HCT116 (cell line): ENCODE measurements at regions of chr10 and their contacts with region 1.

Region 1: DNA sequence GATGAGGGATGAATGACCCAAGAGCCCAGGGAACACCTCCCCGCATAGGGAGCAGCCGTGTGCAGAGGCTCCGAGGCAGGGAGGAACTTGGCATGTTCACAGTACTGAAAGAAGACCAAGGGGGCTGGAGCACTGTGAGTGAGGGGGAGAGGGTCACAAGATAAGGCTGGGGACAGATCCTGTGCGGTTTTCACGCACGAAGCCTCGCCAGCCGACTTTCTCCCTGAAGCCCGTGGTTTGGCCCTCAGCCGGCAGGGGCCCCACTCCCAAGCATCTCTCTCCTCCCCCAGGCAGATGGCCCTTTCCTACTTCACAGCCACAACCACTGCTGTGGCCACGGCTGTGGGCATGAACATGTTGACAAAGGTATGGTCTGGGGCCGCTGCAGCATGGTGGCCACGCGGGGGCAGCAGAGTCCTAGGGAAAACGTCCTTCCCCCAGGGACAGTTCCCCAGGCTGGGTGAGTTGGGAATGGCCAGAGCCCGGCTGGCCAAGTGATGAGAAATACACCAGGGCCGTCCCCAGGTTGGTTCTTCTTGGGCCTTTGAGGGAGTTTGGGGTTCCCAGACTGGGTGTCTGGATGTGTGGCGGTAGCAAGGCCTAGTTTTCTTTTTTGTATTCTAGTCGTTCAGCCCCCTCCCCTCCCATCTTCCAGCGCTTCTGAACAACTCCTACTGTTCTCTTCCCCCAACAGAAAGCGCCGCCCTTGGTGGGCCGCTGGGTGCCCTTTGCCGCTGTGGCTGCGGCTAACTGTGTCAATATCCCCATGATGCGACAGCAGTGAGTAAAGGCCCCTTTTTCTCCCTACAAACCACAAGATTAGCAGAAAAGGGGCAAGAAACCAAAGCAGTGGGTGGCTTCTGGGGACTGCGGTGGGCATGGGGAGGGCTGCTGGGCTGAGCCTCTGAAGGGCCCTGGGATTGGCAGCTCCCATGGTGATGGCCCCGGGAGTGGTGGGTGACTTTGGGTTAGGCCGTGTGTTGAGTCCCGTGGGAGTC is 14.4 kb upstream of the WBP1L start:
- DNase-seq: peak; percentile 49
- ATAC-seq: peak; percentile 99
- H3K4me3 ChIP-seq: no peak overlapping the region
- H3K27ac ChIP-seq: no peak overlapping the region
- H3K4me1 ChIP-seq: no peaks in the 10 kb centered on the region
- H3K27me3 ChIP-seq: no peaks in the 10 kb centered on the region
- CTCF ChIP-seq: peak; percentile 83 to 99 (median 99)
- POLR2A ChIP-seq: no peak
- RAD21 ChIP-seq: peak; percentile 95

Region 2: DNA sequence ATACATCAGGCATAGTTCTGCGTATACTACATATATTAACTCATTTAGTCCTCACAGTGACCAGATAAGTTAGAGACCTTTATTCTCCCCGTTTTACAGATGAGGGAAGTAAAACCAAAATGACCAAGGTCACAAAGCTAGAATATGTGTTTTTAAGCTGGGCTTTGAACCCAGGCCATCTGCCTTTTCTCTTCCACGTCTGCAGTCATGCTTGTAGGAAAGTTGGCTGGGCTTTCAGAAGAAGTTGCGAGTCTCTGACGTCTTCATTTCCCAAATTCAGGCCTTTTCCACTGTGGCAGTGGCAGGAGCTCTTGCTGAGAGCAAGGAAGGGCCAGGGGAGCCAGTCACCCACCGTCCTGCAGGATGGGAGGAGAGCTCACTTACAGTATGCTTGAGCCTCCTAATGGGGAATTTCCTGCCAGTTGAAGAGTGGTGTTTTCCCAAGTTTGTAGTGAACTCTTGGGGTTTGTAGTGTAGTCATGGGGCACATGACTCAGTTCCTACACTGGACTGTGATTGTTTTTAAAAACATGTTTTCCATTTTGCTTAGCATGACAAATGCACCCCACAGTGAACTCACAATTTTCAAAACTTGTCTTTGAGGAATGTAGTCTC is 73.7 kb after region 1 on chr10:
- CTCF ChIA-PET with region 1: no interaction called
- POLR2A ChIA-PET with region 1: no interaction called
- RAD21 ChIA-PET with region 1: no interaction called
- intact Hi-C with region 1: no loop called
- DNase-seq: no peak
- ATAC-seq: 0 out of 2 replicates have a peak, but pooled peaks have one; percentile 20
- H3K4me3 ChIP-seq: no peak overlapping the region
- H3K27ac ChIP-seq: no peak overlapping the region
- H3K4me1 ChIP-seq: no peaks in the 10 kb centered on the region
- H3K27me3 ChIP-seq: no peaks in the 10 kb centered on the region
- CTCF ChIP-seq: no peak
- POLR2A ChIP-seq: no peak
- RAD21 ChIP-seq: no peak

Region 3: DNA sequence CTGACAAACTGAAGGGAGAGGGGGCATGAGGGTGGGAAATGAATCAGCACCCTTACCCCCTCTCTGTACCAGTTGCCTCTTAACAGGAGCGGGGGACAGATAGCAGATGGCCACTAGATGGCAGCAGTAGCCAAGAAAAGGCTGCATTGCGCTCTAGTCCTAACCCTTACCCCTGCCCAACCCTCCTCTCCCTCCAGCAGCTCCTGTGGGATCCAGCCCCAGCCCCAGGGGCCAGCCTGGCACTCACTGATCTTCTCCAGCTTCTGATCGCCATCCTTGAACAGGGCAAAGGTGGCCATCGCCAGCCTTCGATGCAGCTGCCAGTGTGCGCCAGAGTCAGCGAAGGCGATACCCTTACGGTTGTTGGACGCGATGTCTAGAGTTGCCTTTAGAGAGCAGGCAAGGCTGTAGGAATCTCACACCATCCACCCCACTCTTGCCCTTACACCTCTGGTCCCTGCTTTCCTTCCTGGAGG is 105.7 kb after region 1 on chr10:
- CTCF ChIA-PET with region 1: no interaction called
- POLR2A ChIA-PET with region 1: no interaction called
- RAD21 ChIA-PET with region 1: no interaction called
- intact Hi-C with region 1: loop called (anchors 2 kb)
- DNase-seq: peak; percentile 77
- ATAC-seq: peak; percentile 100
- H3K4me3 ChIP-seq: no peak overlapping the region
- H3K27ac ChIP-seq: no peak overlapping the region
- H3K4me1 ChIP-seq: no peaks in the 10 kb centered on the region; a peak in 1 of 4 replicates
- H3K27me3 ChIP-seq: no peaks in the 10 kb centered on the region; the same call in 1 of the 2 replicates
- CTCF ChIP-seq: peak; percentile 92 to 99 (median 93)
- POLR2A ChIP-seq: no peak
- RAD21 ChIP-seq: peak; percentile 98

Region 4: DNA sequence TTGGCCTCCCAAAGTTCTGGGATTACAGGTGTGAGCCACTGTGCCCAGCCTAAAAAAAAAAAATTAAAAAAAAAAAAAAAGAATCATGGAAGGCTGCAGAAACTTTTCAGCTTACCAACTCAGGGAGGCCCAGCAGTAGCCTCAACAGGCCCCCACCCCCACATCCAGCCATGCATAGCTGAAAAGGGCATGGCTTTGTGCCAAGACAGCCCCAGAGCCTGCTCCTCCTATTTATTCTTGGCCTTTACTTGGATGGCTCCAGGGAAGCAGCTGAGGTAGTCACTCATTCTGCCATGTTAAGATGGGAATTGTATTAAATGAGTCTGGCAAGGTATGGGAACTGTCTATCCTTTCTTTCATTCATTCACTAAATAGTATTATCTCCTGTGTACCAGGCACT is 175.0 kb after region 1 on chr10:
- CTCF ChIA-PET with region 1: interaction called, 8 read pairs
- POLR2A ChIA-PET with region 1: interaction called, 3 read pairs
- RAD21 ChIA-PET with region 1: no interaction called
- intact Hi-C with region 1: loop called (anchors 1 kb)
- DNase-seq: no peak
- ATAC-seq: no peak
- H3K4me3 ChIP-seq: no peak overlapping the region
- H3K27ac ChIP-seq: no peak overlapping the region
- H3K4me1 ChIP-seq: no peaks in the 10 kb centered on the region
- H3K27me3 ChIP-seq: no peaks in the 10 kb centered on the region
- CTCF ChIP-seq: no peak
- POLR2A ChIP-seq: no peak
- RAD21 ChIP-seq: no peak

Region 5: DNA sequence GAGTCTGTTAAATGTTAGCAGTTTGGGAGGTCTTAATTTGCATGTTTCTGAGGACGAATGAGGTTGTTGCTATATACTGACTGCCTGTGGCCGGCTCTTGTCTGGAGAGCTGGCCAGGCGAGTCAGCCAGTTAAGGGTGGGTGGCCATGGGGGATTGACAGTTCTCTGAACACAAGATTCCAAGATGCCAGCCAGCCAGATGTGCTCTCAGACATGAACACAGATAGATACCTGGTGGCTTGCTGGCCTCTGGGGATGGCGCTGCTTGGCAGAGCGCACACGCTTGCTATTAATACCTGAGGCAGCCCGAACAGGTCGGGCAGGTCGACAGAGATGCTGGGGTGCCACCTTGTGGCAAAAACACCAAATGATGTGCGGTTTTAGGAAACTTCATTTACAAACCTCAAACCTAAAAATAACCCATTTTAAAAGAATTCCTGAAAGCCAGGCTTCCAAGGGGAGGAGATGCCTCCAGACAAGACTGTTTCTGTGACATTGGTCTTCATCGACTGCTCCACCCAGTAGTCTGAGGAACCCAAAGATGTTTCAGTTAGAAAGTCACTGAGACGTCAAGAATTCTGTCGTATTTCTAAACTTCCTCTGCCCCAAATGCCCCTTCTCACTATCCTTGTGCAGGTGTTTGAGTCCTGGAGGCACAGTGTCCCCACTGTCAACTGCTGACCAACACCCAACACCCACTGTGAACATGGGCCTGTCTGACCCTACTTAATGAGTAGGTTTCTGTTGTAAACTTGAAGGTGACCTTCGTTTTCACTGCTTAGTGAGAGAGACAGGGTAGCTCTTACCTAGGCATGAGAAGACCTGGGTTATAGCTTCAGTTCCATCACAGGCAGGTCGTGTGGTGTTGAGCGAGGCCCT is 340.4 kb after region 1 on chr10:
- CTCF ChIA-PET with region 1: no interaction called
- POLR2A ChIA-PET with region 1: no interaction called
- RAD21 ChIA-PET with region 1: no interaction called
- intact Hi-C with region 1: loop called (anchors 1 kb)
- DNase-seq: peak; percentile 59
- ATAC-seq: peak; percentile 93
- H3K4me3 ChIP-seq: no peak overlapping the region
- H3K27ac ChIP-seq: no peak overlapping the region
- H3K4me1 ChIP-seq: peaks cover 3 to 6% of the 10 kb centered on the region in 2 experiments; a peak in 1 of 4 replicates
- H3K27me3 ChIP-seq: no peaks in the 10 kb centered on the region
- CTCF ChIP-seq: peak; percentile 75 to 98 (median 94)
- POLR2A ChIP-seq: no peak
- RAD21 ChIP-seq: peak; percentile 98

Region 6: GRCh38 chr10:103333925-103334520 is 604.7 kb after region 1 on chr10:
- CTCF ChIA-PET with region 1: no interaction called
- POLR2A ChIA-PET with region 1: no interaction called
- RAD21 ChIA-PET with region 1: no interaction called
- intact Hi-C with region 1: loop called (anchors 5 kb)
- DNase-seq: peak; percentile 32
- ATAC-seq: no peak
- H3K4me3 ChIP-seq: no peak overlapping the region
- H3K27ac ChIP-seq: no peak overlapping the region
- H3K4me1 ChIP-seq: no peaks in the 10 kb centered on the region
- H3K27me3 ChIP-seq: no peaks in the 10 kb centered on the region
- CTCF ChIP-seq: peak; percentile 68 to 90 (median 77)
- POLR2A ChIP-seq: no peak
- RAD21 ChIP-seq: peak; percentile 84